Left ventricle myocardium inferior (tissue), 1 donor: ENCODE measurements at regions of chr19 and their contacts with region 1.

Region 1: DNA sequence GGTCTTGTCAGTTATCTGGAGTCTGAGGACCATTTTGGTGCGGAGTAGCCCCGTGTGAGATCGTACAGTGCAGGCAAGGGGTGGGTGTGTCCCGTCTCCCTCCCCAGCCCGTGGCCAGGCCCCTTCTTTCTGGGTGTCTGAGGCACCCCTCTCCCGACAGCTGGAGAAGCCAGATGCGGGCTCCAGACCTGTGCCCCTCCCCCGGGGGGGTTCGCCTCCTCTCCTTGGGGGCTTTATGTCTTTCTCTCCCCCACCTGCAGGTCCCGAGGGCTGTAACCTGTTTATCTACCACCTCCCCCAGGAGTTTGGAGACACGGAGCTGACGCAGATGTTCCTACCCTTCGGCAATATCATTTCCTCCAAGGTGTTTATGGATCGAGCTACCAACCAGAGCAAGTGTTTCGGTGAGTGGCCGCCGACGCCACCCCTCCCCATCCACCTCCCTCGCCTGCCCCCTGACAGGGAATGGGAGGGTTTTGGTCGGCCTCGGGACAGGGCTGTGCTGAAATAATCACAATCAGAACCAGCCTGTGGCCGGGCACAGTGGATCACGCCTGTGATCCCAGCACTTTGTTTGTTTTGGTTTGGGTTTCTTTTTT is 65.6 kb downstream of the CELF5 start:
- DNase-seq: no peak
- H3K4me3 ChIP-seq: no peak overlapping the region
- H3K27ac ChIP-seq: no peak overlapping the region
- H3K4me1 ChIP-seq: no peaks in the 10 kb centered on the region
- H3K27me3 ChIP-seq: peaks cover 92% of the 10 kb centered on the region
- CTCF ChIP-seq: no peak

Region 2: DNA sequence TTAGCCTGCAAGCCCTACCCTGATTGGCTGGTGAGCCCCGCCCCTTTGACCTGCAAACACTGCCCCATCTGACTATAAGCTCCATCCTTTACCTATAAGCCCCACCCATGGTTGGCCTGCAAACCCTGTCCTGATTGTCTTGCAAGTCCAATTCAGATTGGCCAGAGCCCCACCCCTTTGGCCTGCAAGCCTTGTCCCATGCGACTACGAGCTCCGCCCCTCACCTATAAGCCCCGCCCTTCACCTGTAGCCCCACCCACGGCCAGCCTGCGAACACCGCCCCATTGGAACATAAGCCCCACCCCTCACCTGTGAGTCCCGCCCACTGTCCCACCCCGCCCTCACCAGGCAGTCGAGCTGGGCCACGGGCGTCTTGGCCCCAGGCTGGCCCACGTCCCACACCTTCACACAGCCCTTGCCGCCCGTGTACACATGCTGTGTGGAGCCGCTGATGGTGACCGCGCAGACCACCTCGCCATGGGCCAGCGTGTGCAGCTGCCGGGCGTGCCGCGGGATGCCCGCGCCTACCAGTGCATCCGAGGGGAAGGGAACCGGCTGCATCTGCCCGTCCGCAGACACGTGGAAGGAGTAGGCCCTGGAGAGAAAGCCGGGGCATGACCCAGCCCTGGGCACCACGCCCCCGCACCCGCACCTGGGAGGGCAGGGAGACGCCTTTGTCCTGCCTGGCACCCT is 283.8 kb before region 1 on chr19:
- intact Hi-C with region 1: loop called (anchors 10 kb)
- DNase-seq: no peak
- H3K4me3 ChIP-seq: no peak overlapping the region
- H3K27ac ChIP-seq: no peak overlapping the region
- H3K4me1 ChIP-seq: no peaks in the 10 kb centered on the region
- H3K27me3 ChIP-seq: no peaks in the 10 kb centered on the region
- CTCF ChIP-seq: no peak

Region 3: DNA sequence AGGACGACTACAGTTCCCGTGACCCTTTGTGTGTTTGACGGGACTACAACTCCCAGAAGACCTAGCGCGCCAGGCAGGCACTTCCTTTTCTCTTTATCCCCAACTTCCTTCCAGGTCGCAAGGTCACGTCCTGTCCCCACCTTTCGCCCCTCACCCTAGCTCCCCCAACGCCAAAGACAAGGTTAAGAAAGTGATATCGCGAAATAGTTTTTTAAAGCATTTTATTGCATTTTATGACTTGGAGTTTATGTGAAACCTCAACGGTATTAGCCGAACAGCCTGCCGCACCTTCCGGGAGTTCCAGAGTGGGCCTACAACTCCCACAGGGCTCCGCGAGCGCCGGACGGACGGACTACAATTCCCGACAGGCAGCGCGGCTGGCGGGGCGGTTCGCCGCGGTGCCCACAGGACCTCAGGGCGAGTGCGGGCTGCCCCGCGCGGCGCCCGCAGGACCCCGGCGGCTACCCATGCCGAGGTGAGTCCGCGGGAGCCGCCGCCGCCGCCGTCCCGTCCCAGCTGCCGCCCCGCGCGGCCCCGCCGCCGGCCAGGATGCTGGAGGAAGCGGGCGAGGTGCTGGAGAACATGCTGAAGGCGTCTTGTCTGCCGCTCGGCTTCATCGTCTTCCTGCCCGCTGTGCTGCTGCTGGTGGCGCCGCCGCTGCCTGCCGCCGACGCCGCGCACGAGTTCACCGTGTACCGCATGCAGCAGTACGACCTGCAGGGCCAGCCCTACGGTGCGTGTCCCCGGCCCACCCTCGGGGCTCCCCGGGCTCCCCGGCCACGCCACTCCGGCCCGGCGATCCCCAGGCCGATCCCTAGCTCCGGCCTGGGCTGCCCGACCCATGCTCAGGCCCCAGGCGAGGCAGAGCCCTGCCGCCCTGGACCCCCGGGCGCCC is 104.3 kb before region 1 on chr19 and contains the start of gene NCLN:
- intact Hi-C with region 1: no loop called
- DNase-seq: peak; percentile 95
- H3K4me3 ChIP-seq: peak within 1 kb of the TSS; percentile 87
- H3K27ac ChIP-seq: peak within 1 kb of the TSS; percentile 92
- H3K4me1 ChIP-seq: peaks cover 44% of the 10 kb centered on the region
- H3K27me3 ChIP-seq: no peaks in the 10 kb centered on the region
- CTCF ChIP-seq: no peak
- total RNA-seq, gene NCLN: 28.3 TPM